RWPE1 (cell line): ENCODE measurements at regions of chr5 and their contacts with region 1.

Region 1: DNA sequence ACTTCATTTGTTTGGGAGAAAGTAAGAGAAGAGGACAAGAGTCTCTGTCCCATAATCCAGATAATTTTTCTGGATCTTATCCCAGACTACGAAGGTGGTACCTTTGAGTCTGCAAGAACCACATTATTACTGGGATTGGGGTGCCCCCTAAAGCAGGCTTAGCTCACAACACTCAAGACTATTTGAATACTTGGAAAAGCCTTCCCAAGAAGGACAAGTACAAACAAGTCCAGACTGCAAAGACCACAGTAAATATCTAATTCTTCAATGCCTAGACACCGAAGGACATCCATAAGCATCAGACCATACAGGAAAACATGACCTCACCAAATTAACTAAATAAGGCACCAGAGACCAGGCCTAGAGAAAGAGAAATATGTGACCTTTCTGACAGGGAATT is 40.2 kb upstream of the TMED7 start:
- DNase-seq: no peak
- H3K27ac ChIP-seq: no peak overlapping the region
- CTCF ChIP-seq: no peak

Region 2: DNA sequence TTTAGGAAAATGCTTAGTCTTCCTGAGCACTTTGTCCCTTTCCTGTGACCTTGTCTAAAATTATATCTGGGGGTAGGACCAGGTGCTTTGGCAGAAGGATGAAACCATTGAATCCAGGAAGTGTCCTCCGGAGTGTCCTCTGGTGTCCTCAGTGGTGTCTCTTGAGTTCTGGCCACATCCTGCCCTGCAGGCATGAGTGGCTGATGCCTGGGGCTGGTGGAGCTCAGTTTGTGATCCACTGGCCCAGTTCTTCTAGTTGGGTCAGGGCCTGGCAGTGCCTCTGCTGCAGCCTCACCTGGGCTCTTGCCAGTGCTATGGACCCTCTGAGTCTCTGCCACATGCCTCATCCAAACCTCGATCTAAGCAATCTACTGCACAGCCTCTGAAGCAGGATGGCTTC is 25.7 kb before region 1 on chr5:
- CTCF ChIA-PET with region 1: interaction called, 10 read pairs
- POLR2A ChIA-PET with region 1: no interaction called
- DNase-seq: no peak
- H3K27ac ChIP-seq: no peak overlapping the region
- CTCF ChIP-seq: no peak